ENCODE measurements at regions of chr9 and their contacts with region 1.

Region 1: DNA sequence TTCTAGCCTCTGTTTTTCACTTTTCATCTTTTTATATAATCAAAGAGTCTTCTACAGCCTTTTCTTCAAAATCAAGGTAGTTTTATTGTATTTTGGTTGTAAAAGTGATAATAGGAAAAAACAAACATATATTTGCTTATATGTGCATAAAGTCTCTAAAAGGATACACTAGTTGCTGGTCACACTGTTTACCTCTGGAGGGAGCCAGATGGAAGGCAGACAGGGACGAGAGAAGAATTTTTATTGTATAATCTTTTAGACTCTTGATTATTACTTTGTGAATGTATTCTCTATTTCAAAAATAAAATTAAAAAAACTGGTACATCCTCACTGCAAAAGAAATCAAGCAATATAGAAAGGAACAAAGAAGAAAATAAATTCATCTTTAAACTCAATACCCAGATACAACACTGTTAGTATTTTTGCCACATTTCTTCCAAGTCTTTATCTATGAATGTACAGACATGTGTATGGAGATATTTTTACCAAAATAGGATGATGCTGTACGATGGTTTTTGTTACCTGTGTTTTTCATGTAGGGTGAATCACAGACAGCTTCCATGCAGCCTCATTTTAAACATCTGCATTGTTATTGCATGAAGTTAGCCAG is 6.1 kb upstream of the RNF183 start:
- DNase-seq: no peak
- ATAC-seq: peak; percentile 76

Region 2: GRCh38 chr9:113409883-113410206 is 100.5 kb after region 1 on chr9:
- intact Hi-C with region 1: loop called (anchors 5 kb)
- DNase-seq: no peak
- ATAC-seq: no peak

Region 3: GRCh38 chr9:113427629-113428028 is 118.3 kb after region 1 on chr9:
- intact Hi-C with region 1: no loop called
- DNase-seq: no peak
- ATAC-seq: no peak